K562 (cell line): ENCODE measurements at regions of chr1 and their contacts with region 1.

Region 1: DNA sequence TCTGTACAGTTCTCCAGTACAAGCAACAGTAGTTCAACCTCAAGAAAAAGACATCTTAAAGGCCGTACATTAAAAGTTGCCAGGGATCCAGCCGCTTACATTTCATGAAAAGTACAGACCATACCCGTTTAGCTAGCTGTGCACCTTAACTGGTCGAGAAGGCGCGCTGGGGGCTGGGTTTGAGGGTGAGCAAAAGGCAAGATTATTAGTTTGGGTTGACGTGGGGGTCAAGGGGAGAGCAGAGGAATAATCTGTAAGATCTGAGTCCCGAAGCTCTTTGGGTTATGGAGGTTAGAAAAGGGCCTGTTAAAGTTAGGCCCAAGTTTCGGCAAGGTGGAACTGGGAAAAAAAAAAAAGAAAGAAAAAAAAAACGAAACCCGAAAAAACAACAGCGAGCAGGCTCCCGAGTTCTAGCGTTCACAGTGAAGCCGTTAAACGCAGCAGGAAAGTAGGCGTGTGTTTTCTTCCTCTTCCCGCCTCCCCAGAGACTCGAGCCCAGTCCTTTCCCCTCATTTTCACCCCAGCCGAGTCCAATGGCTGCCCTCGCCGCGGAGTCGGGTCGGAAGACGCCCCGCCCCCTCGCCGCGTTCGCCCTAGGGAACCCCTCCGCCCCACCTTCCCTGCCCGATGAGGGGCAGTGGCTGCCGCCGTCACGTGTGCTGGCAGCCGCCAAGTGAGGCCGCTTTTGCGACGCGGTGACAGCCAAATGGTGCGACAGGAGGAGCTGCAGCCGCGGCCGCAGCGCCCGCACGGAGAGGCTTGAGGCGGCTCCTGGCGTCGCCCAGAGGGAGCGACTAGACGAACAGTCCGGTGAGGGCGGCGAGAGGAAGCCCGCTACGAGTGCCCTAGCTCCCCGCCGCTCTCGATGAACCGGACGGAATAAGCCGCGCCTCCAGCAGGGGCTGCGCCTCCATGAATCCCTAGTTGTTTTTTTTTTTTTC is at the start of gene PKN2:
- DNase-seq: peak; percentile 94 to 99 (median 94)
- ATAC-seq: peak; percentile 87
- H3K4me3 ChIP-seq: peak within 1 kb of the TSS; percentile 93
- H3K27ac ChIP-seq: peak within 1 kb of the TSS; percentile 96
- H3K4me1 ChIP-seq: peaks cover 4 to 24% of the 10 kb centered on the region in 2 experiments; a peak in 4 of 5 replicates
- H3K27me3 ChIP-seq: no peaks in the 10 kb centered on the region
- CTCF ChIP-seq: peak; percentile 29 to 50 (median 34); a peak in 4 of 6 replicates
- EP300 ChIP-seq: no peak
- POLR2A ChIP-seq: peak; percentile 97
- RAD21 ChIP-seq: peak; percentile 14 to 26; a peak in 2 of 4 replicates
- polyA plus RNA-seq, gene PKN2: 4.5 to 5.4 TPM

Region 2: GRCh38 chr1:87335175-87335884 is 1348.5 kb before region 1 on chr1:
- CTCF ChIA-PET with region 1: no interaction called
- POLR2A ChIA-PET with region 1: no interaction called
- in situ Hi-C with region 1: no loop called
- intact Hi-C with region 1: loop called (anchors 10 kb)
- DNase-seq: peak; percentile 76 to 85 (median 78)
- ATAC-seq: peak; percentile 82
- H3K4me3 ChIP-seq: peak overlapping the region; percentile 52
- H3K27ac ChIP-seq: peak overlapping the region; percentile 84
- H3K4me1 ChIP-seq: peaks cover 15% of the 10 kb centered on the region in 2 experiments; a peak in 4 of 5 replicates
- H3K27me3 ChIP-seq: no peaks in the 10 kb centered on the region
- CTCF ChIP-seq: peak in 2 of 3 experiments; percentile 20 to 29; a peak in 2 of 6 replicates
- EP300 ChIP-seq: no peak
- POLR2A ChIP-seq: peak; percentile 56
- RAD21 ChIP-seq: peak; percentile 27 to 30; a peak in 3 of 4 replicates

Region 3: GRCh38 chr1:88655685-88656299 is 28.0 kb before region 1 on chr1:
- CTCF ChIA-PET with region 1: interaction called, 7 read pairs
- POLR2A ChIA-PET with region 1: interaction called, 4 read pairs
- in situ Hi-C with region 1: no loop called
- intact Hi-C with region 1: loop called (anchors 2 kb)
- DNase-seq: peak; percentile 13 to 39 (median 18)
- ATAC-seq: no peak
- H3K4me3 ChIP-seq: no peak overlapping the region
- H3K27ac ChIP-seq: no peak overlapping the region
- H3K4me1 ChIP-seq: no peaks in the 10 kb centered on the region
- H3K27me3 ChIP-seq: no peaks in the 10 kb centered on the region
- CTCF ChIP-seq: peak in 2 of 3 experiments; percentile 25 to 68; a peak in 4 of 6 replicates
- EP300 ChIP-seq: no peak
- POLR2A ChIP-seq: no peak
- RAD21 ChIP-seq: peak in 1 of 2 experiments; percentile 66; a peak in 3 of 4 replicates

Region 4: GRCh38 chr1:88673446-88673845 is 10.4 kb before region 1 on chr1:
- CTCF ChIA-PET with region 1: no interaction called
- POLR2A ChIA-PET with region 1: interaction called, 18 read pairs
- in situ Hi-C with region 1: no loop called
- intact Hi-C with region 1: no loop called
- DNase-seq: no peak
- ATAC-seq: no peak
- H3K4me3 ChIP-seq: no peak overlapping the region
- H3K27ac ChIP-seq: no peak overlapping the region
- H3K4me1 ChIP-seq: peaks cover 0 to 5% of the 10 kb centered on the region in 2 experiments; a peak in 2 of 5 replicates
- H3K27me3 ChIP-seq: no peaks in the 10 kb centered on the region
- CTCF ChIP-seq: no peak
- EP300 ChIP-seq: no peak
- POLR2A ChIP-seq: no peak
- RAD21 ChIP-seq: no peak

Region 5: DNA sequence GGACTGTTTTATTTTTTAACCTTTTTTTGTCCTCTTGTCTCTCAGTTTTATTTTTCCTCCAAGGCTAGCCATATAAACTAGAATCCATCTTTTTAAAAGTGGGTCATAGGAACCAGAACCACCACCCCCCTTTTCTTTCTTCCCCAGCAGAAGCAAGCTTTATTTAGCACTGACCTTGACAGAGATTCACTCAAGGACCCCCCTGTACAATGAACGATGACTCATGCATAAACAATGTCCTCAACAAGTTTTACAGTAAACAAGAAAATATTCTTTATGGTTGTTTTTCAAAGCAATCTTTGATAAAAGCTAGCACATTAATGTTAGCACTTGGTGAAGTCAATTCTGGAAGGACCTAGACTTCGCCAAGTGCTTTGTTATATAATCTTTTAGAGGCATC is 14.3 kb after region 1 on chr1:
- CTCF ChIA-PET with region 1: no interaction called
- POLR2A ChIA-PET with region 1: interaction called, 49 read pairs
- in situ Hi-C with region 1: no loop called
- intact Hi-C with region 1: no loop called
- DNase-seq: peak in 3 of 4 experiments; percentile 10 to 14 (median 10)
- ATAC-seq: peak; percentile 16; the same call in 1 of the 3 replicates
- H3K4me3 ChIP-seq: no peak overlapping the region
- H3K27ac ChIP-seq: peak overlapping the region; percentile 28; the same call in 1 of the 3 replicates
- H3K4me1 ChIP-seq: peaks cover 0 to 3% of the 10 kb centered on the region in 2 experiments; a peak in 1 of 5 replicates
- H3K27me3 ChIP-seq: no peaks in the 10 kb centered on the region
- CTCF ChIP-seq: no peak
- EP300 ChIP-seq: no peak
- POLR2A ChIP-seq: no peak
- RAD21 ChIP-seq: no peak

Region 6: DNA sequence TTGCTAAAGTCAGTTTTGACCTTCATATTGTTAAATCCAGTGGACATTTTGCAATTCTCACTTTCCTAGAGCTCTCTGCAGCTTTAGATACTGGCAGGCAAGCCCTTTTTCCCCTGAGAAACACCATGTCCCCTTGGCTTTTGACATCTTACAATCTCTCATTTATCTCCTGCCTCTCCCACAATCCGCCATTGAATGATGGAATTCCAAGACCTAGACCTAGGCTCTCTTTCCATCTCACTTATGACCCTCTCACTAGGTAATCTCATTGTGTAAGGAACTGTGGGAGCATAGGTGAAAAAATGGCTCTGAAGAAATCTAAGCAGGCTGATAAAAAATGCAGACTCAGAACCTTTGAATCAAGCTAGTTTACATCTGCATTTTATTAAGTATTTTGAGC is 306.6 kb after region 1 on chr1:
- CTCF ChIA-PET with region 1: no interaction called
- POLR2A ChIA-PET with region 1: no interaction called
- in situ Hi-C with region 1: no loop called
- intact Hi-C with region 1: loop called (anchors 2 kb)
- DNase-seq: no peak
- ATAC-seq: no peak
- H3K4me3 ChIP-seq: peak overlapping the region; percentile 89; the same call in 1 of the 2 replicates
- H3K27ac ChIP-seq: no peak overlapping the region
- H3K4me1 ChIP-seq: peaks cover 8 to 14% of the 10 kb centered on the region in 2 experiments; a peak in 4 of 5 replicates
- H3K27me3 ChIP-seq: no peaks in the 10 kb centered on the region
- CTCF ChIP-seq: no peak
- EP300 ChIP-seq: no peak
- POLR2A ChIP-seq: no peak
- RAD21 ChIP-seq: no peak

Region 7: GRCh38 chr1:90000934-90001676 is 1317.3 kb after region 1 on chr1:
- CTCF ChIA-PET with region 1: no interaction called
- POLR2A ChIA-PET with region 1: no interaction called
- in situ Hi-C with region 1: no loop called
- intact Hi-C with region 1: loop called (anchors 10 kb)
- DNase-seq: peak in 3 of 4 experiments; percentile 23 to 36 (median 27)
- ATAC-seq: peak; percentile 66
- H3K4me3 ChIP-seq: no peak overlapping the region
- H3K27ac ChIP-seq: 0 out of 3 replicates have a peak overlapping the region, but pooled peaks have one; percentile 6
- H3K4me1 ChIP-seq: peaks cover 7 to 14% of the 10 kb centered on the region in 2 experiments; a peak in 4 of 5 replicates
- H3K27me3 ChIP-seq: no peaks in the 10 kb centered on the region
- CTCF ChIP-seq: peak; percentile 44 to 48 (median 47)
- EP300 ChIP-seq: no peak
- POLR2A ChIP-seq: no peak
- RAD21 ChIP-seq: no peak